ENCODE measurements at regions of chr11 and their contacts with region 1.

Region 1: GRCh38 chr11:19441752-19442553 is 201.2 kb upstream of the E2F8 start:
- DNase-seq: peak; percentile 41
- H3K4me3 Mint-ChIP-seq: no peak overlapping the region
- H3K27ac Mint-ChIP-seq: peak overlapping the region; percentile 18
- H3K4me1 Mint-ChIP-seq: peaks cover 24% of the 10 kb centered on the region
- H3K27me3 Mint-ChIP-seq: peaks cover 46% of the 10 kb centered on the region

Region 2: GRCh38 chr11:19116971-19117750 is 324.8 kb before region 1 on chr11 and contains the start of gene ZDHHC13:
- intact Hi-C with region 1: loop called (anchors 5 kb)
- DNase-seq: peak; percentile 94
- H3K4me3 Mint-ChIP-seq: peak within 1 kb of the TSS; percentile 93
- H3K27ac Mint-ChIP-seq: peak within 1 kb of the TSS; percentile 84
- H3K4me1 Mint-ChIP-seq: peaks cover 54% of the 10 kb centered on the region
- H3K27me3 Mint-ChIP-seq: peaks cover 12% of the 10 kb centered on the region
- total RNA-seq, gene ZDHHC13: 25.0 and 28.9 TPM in 2 replicates

Region 3: DNA sequence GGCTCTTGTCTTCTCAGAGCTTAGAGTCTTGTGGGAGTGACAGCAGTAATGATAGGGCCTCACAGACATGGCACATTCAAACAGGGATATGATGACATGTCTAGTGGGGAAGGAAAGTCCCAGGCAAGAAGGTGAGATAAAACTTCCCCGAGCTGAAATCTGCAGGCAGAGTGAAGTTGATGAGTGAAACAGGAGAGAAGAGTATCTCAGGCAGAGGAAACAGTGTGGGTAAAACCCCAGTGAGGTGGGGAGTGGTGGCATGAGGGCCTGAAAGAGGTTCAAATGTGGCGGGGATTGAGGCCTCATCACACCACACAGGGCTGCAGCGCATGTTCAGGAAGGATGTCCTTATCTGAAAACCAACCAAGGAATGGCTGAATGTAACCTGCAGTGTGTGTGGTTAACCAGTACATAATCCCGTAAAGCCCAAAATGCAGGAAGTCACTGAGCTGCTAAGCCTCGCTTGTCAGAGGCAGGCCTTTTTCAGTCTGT is 47.4 kb before region 1 on chr11:
- intact Hi-C with region 1: loop called (anchors 1 kb)
- DNase-seq: peak; percentile 17
- H3K4me3 Mint-ChIP-seq: no peak overlapping the region
- H3K27ac Mint-ChIP-seq: no peak overlapping the region
- H3K4me1 Mint-ChIP-seq: peaks cover 7% of the 10 kb centered on the region
- H3K27me3 Mint-ChIP-seq: peaks cover 3% of the 10 kb centered on the region